ENCODE measurements at regions of chr17 and their contacts with region 1.

Region 1: DNA sequence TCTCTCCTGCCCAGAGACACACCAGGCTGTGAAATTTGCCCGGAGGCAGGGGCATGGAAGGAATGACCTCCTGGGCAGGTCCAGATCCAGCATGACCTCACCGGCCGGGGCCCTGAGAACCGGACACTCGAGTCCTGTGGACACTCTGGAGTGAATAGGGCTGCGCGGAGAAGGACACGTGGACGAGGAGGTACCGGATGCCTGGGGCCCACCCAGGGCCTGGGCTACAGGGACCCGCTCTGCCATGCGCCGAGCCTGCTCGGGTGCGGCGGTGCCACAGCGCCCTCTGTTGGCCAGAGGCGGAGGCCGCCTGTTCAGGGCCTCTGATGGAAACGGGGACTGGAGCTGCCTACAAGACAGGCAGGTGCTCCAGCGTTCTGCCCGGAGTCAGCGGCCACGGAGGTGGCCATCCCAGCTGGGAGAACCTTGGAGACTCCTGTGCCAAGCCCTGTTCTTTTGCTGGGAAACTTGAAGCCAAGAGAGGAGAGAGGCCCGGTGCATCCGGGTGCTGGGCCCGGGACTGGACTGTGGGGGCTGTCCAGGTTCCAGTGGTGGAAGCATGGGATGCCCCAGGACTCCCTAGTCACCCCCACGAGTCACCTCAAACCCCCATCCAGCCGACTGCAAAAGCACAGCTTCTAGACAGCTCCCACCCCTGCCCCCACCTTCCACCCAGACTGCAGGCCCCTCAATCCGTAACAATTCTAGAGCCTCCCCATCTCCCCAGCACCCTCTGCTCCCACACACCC is 19.3 kb upstream of the NXPH3 start:
- DNase-seq: peak in 9 of 10 donors; percentile 65 to 89 (median 78)
- H3K4me3 ChIP-seq: peak overlapping the region in 22 of 59 donors; percentile 2 to 47 (median 26)
- H3K27ac ChIP-seq: peak overlapping the region in 1 of 59 donors; percentile 23
- H3K27me3 ChIP-seq: peaks cover 0 to 4% (median 0%) of the 10 kb centered on the region in 45 donors
- CTCF ChIP-seq: peak; percentile 90 to 100 (median 98)

Region 2: GRCh38 chr17:49217651-49218413 is 338.6 kb before region 1 on chr17:
- intact Hi-C with region 1: no loop called
- DNase-seq: peak in 1 of 10 donors; percentile 27
- H3K4me3 ChIP-seq: no peak overlapping the region
- H3K27ac ChIP-seq: peak overlapping the region in 8 of 59 donors; percentile 4 to 65 (median 36)
- H3K27me3 ChIP-seq: peaks cover 0 to 37% (median 17%) of the 10 kb centered on the region in 45 donors
- CTCF ChIP-seq: no peak

Region 3: DNA sequence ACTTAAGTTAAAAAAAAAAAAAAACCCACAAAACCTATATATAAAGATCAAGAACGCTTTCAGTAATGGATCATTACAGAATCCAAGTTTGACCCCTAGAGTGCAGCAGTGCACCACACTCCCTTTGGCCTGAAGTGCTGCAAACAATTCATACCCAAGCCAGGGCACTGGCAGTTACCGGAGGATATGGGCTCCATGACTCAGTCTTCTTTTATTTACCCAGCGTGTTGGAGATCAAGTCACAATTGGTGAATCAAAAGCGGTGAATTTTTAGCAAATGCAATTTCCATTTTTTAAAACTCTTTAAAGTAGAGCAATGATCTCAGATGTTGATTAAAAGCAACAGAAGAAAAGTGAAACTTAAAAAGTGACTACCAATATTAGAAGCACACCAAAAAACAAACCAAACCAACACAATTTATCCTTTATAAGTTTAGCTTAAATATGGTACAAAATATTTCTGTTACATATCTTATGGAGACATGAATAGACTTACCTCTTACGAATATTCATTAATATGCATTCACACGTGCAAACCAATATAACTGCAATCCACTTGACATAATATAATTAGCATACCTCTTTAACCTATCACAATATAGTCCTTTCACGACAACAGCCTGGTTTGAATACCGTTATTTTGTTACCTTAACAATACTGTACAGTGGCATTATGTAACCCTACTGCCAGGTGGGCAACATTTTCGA is 240.7 kb before region 1 on chr17:
- intact Hi-C with region 1: loop called (anchors 5 kb)
- DNase-seq: peak; percentile 53 to 88 (median 78)
- H3K4me3 ChIP-seq: peak overlapping the region in 31 of 59 donors; percentile 0 to 47 (median 23)
- H3K27ac ChIP-seq: peak overlapping the region in 58 of 59 donors; percentile 3 to 95 (median 83)
- H3K27me3 ChIP-seq: no peaks in the 10 kb centered on the region
- CTCF ChIP-seq: peak; percentile 60 to 97 (median 85)

Region 4: DNA sequence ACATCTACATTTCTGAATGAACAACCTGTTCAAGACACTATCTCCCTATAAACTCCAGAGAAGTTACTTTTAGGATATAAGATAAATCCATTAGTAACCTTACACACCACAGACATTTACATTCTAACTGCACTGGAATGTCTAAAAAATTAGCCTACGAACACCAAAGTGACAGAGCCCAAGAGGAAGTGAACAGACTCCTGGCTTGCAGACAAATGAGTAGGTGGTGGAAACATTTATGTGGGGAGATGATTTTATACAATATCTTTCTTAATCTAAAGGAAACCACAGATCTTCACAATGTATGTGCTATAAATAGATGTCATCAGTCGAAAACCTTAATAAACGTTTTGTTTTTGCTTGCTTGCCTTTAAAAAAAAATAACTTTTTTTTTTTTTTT is 213.1 kb before region 1 on chr17:
- intact Hi-C with region 1: no loop called
- DNase-seq: no peak
- H3K4me3 ChIP-seq: no peak overlapping the region
- H3K27ac ChIP-seq: peak overlapping the region in 2 of 59 donors; percentile 6 to 51
- H3K27me3 ChIP-seq: no peaks in the 10 kb centered on the region
- CTCF ChIP-seq: no peak

Region 5: GRCh38 chr17:49407981-49408501 is 148.4 kb before region 1 on chr17:
- intact Hi-C with region 1: loop called (anchors 5 kb)
- DNase-seq: peak; percentile 55 to 79 (median 68)
- H3K4me3 ChIP-seq: no peak overlapping the region
- H3K27ac ChIP-seq: peak overlapping the region in 36 of 59 donors; percentile 0 to 94 (median 37)
- H3K27me3 ChIP-seq: no peaks in the 10 kb centered on the region
- CTCF ChIP-seq: peak; percentile 42 to 86 (median 72)

Region 6: DNA sequence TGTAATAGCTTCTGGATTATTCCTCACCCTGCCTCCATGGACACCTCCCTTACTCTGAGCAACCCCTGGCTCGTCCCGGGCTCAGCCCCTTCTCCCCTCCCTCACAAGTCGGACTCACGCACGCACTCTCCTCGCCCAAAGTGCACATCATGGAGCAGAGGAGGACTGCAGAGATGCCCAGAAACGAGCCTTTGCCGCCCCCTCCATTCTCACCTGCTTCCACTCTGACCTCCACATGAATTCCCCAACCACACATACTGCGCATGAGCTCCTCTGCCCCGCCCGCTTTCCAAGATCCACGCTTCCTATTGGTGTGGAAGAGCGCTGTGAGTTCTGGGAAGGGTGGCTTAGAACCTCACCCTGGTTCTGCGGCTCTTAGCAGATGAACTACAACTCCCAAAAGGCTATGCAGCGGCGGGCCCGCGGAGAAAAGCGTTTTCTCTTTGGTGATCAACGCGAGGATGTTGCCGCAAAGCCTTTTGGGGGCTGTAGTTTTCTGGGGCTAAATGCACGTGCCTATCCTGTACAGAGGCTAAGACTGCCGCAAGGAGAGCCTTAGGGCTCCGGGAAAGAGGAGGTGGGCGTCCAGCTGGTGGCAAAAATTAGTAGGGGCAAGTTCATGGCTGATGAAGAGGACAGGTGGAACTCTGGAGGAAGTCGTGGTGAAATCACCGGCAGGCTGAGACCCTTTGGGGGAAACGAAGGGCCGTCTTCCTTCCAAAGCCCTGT is 141.6 kb before region 1 on chr17 and contains the start of gene PHB1:
- intact Hi-C with region 1: loop called (anchors 5 kb)
- DNase-seq: peak; percentile 92 to 99 (median 97)
- H3K4me3 ChIP-seq: peak within 1 kb of the TSS; percentile 70 to 100 (median 92)
- H3K27ac ChIP-seq: peak within 1 kb of the TSS in 16 of 59 donors; percentile 12 to 78 (median 40)
- H3K27me3 ChIP-seq: no peaks in the 10 kb centered on the region
- CTCF ChIP-seq: peak in 36 of 56 donors; percentile 5 to 60 (median 34)
- total RNA-seq, gene PHB1: 64.2 to 118 (median 89.1) TPM

Region 7: DNA sequence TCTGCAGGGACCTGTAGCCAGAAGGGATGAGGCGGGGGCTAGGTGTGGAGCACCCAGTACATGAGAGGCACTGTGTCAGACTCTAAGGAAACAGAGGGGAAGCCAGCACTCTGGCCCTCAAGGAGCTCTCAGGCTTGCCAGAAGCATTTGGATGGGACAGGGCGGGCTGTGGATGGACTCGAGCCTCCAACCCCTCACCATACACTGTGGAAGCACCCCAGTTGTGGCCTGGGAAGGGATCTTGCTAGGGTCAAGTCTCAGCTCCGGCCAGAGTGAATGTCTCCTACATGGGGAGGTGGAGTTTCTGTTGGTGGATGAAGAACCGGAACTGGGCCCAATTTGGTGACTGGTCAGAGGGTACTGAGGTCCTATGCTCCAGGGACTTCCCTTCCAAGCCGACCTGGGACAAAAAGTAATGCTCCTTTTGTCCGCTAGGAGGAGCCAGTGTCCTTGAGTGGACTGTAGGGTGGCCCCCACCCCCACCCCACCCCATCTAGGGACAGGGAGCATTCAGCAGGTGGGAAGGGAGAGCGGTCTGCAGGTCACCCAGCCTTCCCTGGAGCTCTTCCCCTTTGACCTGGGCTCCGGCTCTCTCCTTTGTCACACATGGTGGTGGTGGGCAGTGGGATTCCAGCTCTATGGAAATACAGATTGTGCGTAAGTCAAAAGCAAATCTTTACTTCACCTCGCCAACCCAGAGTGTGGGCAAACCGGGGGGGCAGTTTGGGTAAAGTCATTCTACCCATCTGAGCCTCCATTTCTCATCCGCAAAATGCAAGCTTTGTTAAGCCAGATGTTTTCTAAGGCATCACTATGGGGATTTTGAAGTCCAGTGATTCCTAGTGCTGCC is 121.4 kb before region 1 on chr17:
- intact Hi-C with region 1: loop called (anchors 2 to 5 kb)
- DNase-seq: peak in 2 of 10 donors; percentile 54 to 60
- H3K4me3 ChIP-seq: no peak overlapping the region
- H3K27ac ChIP-seq: no peak overlapping the region
- H3K27me3 ChIP-seq: peaks cover 0 to 27% (median 9%) of the 10 kb centered on the region in 45 donors
- CTCF ChIP-seq: peak in 55 of 56 donors; percentile 54 to 89 (median 77)

Region 8: GRCh38 chr17:49447628-49448302 is 108.6 kb before region 1 on chr17:
- intact Hi-C with region 1: no loop called
- DNase-seq: peak in 1 of 10 donors; percentile 2
- H3K4me3 ChIP-seq: no peak overlapping the region
- H3K27ac ChIP-seq: no peak overlapping the region
- H3K27me3 ChIP-seq: peaks cover 0 to 4% (median 0%) of the 10 kb centered on the region in 45 donors
- CTCF ChIP-seq: no peak

Region 9: DNA sequence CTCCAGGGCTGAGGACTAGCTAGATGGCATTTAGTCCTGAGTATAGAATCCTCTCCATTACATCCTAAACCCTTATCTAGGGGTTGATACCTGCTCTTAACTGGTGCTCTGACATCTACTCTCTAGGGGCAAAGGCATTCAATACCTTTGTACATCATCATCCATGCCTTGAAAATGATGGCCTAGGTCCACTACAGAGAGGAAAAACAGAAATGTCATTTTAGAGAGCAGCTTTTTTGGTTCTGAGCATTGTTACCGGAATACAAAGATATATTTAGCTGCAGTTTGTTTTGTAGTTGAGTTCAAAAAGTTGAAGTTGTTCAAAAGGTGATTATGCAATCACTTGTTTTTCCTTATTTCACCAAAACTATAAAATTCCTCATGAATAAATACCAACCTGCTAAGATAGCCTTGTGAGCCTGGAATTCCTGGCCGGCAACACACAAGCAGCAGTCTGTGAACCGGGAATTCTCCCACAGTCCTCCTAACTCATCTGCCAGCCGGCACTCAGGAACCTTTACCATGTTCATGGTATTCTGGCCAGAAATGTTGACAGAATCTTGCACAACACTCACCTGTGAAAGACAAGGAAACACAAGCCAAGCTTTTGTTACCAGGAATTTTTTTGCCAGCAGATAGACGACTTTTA is 54.6 kb after region 1 on chr17:
- intact Hi-C with region 1: no loop called
- DNase-seq: no peak
- H3K4me3 ChIP-seq: no peak overlapping the region
- H3K27ac ChIP-seq: peak overlapping the region in 3 of 59 donors; percentile 13 to 48 (median 28)
- H3K27me3 ChIP-seq: no peaks in the 10 kb centered on the region
- CTCF ChIP-seq: no peak

Measured in dorsolateral prefrontal cortex (tissue), 120 donors.